Activated CD4-positive, alpha-beta T cell treated with anti-CD3 and anti-CD28 coated beads, Interleukin-2, amount 10 ng/mL, durations not matched to agents 24 days and 14 days (primary cell): ENCODE measurements at regions of chr12 and their contacts with region 1.

Region 1: GRCh38 chr12:120252071-120252906 is 13.2 kb downstream of the PXN start:
- DNase-seq: peak; percentile 92
- H3K4me3 Mint-ChIP-seq: peak overlapping the region; percentile 67
- H3K27ac Mint-ChIP-seq: peak overlapping the region; percentile 70
- H3K4me1 Mint-ChIP-seq: peaks cover 74% of the 10 kb centered on the region
- H3K27me3 Mint-ChIP-seq: no peaks in the 10 kb centered on the region

Region 2: GRCh38 chr12:120228291-120229070 is 23.8 kb before region 1 on chr12:
- intact Hi-C with region 1: loop called (anchors 1 kb)
- DNase-seq: peak; percentile 96
- H3K4me3 Mint-ChIP-seq: peak overlapping the region; percentile 65
- H3K27ac Mint-ChIP-seq: peak overlapping the region; percentile 79
- H3K4me1 Mint-ChIP-seq: peaks cover 74% of the 10 kb centered on the region
- H3K27me3 Mint-ChIP-seq: no peaks in the 10 kb centered on the region

Region 3: DNA sequence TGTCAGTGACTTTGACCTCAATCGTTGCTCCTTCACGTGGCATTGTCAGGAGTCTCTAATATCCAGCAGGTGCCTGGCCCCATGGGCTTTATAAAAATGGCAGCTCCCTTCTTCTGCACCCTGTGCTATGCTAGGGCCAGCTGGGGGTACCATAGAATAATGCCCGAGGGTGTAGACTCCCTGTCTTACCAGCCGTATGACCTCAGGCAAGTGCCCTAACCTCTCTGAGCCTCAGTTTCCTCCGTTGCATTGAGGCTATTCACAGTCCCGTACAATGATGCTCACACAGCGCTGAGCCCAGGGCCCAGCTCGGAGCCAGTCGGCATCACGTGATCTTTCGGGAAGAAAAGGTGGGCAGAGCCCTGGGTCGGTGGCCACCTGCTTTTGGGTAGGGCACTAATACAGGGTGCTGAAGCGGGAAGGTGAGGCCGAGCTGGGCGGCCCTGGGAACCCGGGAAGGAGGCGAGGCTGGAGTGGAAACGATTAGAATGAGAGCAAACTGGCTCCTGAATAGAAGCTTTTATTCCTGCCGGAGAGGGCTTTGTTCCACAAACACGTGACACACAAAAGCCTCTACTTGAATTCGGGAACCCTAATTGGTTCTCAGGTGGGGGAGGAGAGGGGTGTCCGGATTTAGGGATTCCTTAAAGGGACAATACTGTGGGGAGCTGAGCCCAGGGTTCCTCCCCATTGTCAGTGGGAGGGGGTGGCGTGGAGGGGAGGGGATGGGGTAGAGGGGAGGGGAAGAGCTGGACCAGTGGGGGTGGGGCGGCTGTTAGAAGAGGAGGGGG is 136.6 kb after region 1 on chr12:
- intact Hi-C with region 1: no loop called
- DNase-seq: no peak
- H3K4me3 Mint-ChIP-seq: no peak overlapping the region
- H3K27ac Mint-ChIP-seq: no peak overlapping the region
- H3K4me1 Mint-ChIP-seq: no peaks in the 10 kb centered on the region
- H3K27me3 Mint-ChIP-seq: peaks cover 39% of the 10 kb centered on the region

Region 4: GRCh38 chr12:120457133-120457532 is 204.8 kb after region 1 on chr12:
- intact Hi-C with region 1: no loop called
- DNase-seq: no peak
- H3K4me3 Mint-ChIP-seq: no peak overlapping the region
- H3K27ac Mint-ChIP-seq: no peak overlapping the region
- H3K4me1 Mint-ChIP-seq: peaks cover 2% of the 10 kb centered on the region
- H3K27me3 Mint-ChIP-seq: no peaks in the 10 kb centered on the region